Activated CD8-positive, alpha-beta T cell treated with anti-CD3 and anti-CD28 coated beads, Interleukin-2, amount 10 ng/mL, durations not matched to agents 7 days and 5 days (primary cell): ENCODE measurements at regions of chr9 and their contacts with region 1.

Region 1: DNA sequence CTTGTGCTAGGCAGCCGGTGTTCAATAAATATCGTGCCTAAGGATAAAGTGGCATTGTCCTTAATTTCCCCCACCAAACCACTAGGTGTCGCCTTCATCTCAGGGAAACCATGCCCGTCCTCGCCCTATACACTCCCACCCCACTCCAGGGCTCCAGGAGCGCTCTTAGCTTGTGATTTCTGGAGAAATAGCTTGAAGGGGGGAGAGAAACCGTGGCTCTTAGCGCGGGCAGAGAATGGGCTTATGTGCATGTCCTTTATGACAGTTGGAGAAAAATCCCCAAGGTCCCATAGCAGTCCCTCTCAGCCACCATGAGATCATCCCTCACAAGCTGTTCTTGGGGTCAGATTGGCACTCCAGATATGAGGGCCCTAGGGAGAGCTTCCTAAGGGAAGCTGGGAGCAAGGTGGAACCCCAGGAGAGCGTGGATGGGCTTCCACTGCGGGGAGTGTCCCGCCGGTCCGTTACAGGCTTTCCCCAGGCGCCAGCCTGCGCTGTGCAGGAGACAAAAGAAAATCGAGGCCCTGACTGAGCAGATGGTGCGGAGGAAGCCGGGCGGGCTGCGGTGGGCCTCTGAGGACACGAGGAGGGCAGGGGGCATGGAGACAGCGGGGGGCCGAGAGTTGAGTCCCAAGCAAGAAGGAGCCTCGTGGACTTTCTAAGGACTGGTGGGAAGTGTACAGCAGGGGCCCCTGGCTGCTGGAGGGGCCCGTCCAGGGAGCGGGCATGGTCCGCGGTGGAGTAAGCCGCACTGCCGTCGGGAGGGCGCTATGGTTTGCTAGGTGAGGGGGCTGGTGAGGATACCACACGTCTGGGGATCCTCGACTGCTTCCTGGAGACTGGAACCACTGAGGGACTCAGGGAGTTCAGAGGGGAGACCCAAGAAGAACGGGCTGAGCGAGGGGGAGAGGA is 750 bp upstream of the NPR2 start:
- DNase-seq: peak; percentile 73
- ATAC-seq: peak; percentile 90
- H3K4me3 Mint-ChIP-seq: no peak overlapping the region
- H3K27ac Mint-ChIP-seq: no peak overlapping the region
- H3K4me1 Mint-ChIP-seq: peaks cover 17% of the 10 kb centered on the region
- H3K27me3 Mint-ChIP-seq: no peaks in the 10 kb centered on the region

Region 2: DNA sequence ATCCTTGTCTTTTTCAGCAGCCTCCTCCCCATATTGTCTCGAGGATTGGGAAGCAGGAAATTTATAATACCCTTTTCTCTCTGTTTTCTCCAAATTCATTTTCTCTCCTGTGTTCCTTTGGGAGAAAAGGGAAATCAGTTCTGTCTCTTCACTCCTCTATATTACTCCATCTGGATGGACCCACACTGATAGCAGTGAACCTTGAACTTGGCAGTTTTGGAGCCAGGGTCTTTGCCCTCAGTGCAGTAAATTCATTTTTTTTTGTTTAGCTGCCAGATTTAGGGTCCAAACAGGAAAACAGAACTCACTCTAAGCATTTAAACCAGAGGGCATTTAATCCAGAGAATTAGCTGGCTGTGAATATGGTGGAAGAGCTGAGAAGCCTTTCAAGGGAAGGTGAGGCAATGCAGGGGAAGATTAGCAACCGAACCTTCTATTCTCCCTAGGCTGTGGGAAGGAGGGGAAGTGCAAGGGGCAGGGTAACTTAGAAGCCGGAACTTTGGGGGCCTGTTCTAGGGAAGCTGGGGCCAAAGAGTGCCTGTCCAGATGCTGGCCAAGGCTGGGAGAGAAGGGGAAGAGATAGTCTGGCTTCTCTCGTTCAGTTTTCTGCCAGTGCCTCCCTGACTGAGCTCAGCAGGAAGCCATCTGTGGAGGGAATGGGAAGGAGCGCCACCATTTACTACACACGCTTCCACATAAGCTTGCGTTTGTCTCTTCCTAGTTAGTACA is 15.6 kb before region 1 on chr9:
- CTCF ChIA-PET with region 1: interaction called, 17 read pairs
- POLR2A ChIA-PET with region 1: interaction called, 3 read pairs
- DNase-seq: no peak
- ATAC-seq: no peak
- H3K4me3 Mint-ChIP-seq: no peak overlapping the region
- H3K27ac Mint-ChIP-seq: no peak overlapping the region
- H3K4me1 Mint-ChIP-seq: no peaks in the 10 kb centered on the region
- H3K27me3 Mint-ChIP-seq: no peaks in the 10 kb centered on the region

Region 3: GRCh38 chr9:35814841-35815543 is 24.4 kb after region 1 on chr9 and contains the start of gene HINT2:
- CTCF ChIA-PET with region 1: interaction called, 33 read pairs
- POLR2A ChIA-PET with region 1: no interaction called
- DNase-seq: peak; percentile 100
- ATAC-seq: peak; percentile 82
- H3K4me3 Mint-ChIP-seq: peak within 1 kb of the TSS; percentile 91
- H3K27ac Mint-ChIP-seq: peak within 1 kb of the TSS; percentile 95
- H3K4me1 Mint-ChIP-seq: peaks cover 47% of the 10 kb centered on the region
- H3K27me3 Mint-ChIP-seq: peaks cover 14% of the 10 kb centered on the region
- total RNA-seq, gene HINT2: 74.7 to 76.8 TPM

Region 4: GRCh38 chr9:35820076-35820475 is 29.4 kb after region 1 on chr9:
- CTCF ChIA-PET with region 1: interaction called, 59 read pairs
- POLR2A ChIA-PET with region 1: no interaction called
- DNase-seq: no peak
- ATAC-seq: no peak
- H3K4me3 Mint-ChIP-seq: no peak overlapping the region
- H3K27ac Mint-ChIP-seq: no peak overlapping the region
- H3K4me1 Mint-ChIP-seq: peaks cover 3% of the 10 kb centered on the region
- H3K27me3 Mint-ChIP-seq: peaks cover 22% of the 10 kb centered on the region

Region 5: GRCh38 chr9:35826071-35826701 is 35.5 kb after region 1 on chr9:
- CTCF ChIA-PET with region 1: interaction called, 59 read pairs
- POLR2A ChIA-PET with region 1: no interaction called
- DNase-seq: peak; percentile 58
- ATAC-seq: peak; percentile 29
- H3K4me3 Mint-ChIP-seq: no peak overlapping the region
- H3K27ac Mint-ChIP-seq: no peak overlapping the region
- H3K4me1 Mint-ChIP-seq: peaks cover 27% of the 10 kb centered on the region
- H3K27me3 Mint-ChIP-seq: peaks cover 14% of the 10 kb centered on the region

Region 6: DNA sequence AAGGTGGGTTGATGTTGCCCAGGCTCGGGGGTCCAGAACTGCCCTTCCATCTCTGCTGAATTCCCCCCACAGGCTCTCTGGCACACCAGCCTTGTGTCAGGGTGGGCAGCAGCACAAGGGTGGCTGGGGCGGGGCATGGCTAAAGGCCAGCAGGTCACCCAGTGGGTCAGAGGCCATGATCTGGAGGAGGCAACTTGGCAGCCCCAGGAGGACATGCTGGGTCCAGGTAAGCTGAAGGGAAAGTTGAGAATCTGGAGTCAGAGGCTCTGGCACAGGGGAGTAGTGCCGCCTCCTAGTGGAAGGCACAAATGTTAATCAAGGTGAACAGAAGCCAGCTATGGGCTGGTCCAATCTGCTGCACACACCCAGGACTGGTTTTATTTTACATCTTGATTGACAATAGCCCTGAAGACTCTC is 44.6 kb after region 1 on chr9:
- CTCF ChIA-PET with region 1: interaction called, 21 read pairs
- POLR2A ChIA-PET with region 1: no interaction called
- DNase-seq: peak; percentile 41
- ATAC-seq: no peak
- H3K4me3 Mint-ChIP-seq: no peak overlapping the region
- H3K27ac Mint-ChIP-seq: no peak overlapping the region
- H3K4me1 Mint-ChIP-seq: peaks cover 15% of the 10 kb centered on the region
- H3K27me3 Mint-ChIP-seq: no peaks in the 10 kb centered on the region

Region 7: DNA sequence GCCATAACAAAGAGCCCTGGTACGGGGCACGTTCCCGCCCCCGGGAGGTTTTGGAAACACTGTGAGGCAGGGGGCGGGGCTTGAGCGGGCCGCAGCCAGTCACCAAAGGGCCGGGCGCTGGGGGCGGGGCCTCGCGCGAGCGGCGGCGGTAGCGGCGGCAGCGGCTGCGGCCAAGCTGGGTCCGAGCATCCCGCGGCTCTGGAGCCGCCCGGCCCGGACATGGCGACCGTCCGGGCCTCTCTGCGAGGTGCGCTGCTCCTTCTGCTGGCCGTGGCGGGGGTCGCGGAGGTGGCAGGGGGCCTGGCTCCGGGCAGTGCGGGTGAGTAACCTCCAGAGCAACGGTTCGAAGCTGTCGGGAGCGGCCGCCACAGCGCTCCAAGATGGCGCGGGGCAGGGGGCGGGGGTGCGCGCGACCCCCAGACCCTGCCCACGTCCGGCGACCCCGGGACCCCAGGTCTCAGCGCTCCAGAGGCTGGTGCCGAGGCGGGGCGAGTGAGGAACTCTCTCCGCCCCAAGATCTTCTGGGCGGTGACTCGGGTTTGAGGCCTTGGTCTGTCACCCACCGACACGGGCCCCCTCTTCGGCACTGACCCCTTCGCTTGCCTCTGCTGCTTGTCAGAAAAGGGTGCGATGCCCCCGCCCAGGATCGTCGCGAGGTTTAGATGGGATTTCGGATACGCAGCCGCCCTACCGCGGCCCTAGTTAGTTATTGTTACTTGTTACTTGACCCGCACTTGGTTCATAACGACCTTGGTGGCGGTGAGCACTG is 246.3 kb after region 1 on chr9 and contains the start of gene RECK:
- CTCF ChIA-PET with region 1: no interaction called
- POLR2A ChIA-PET with region 1: no interaction called
- DNase-seq: peak; percentile 88
- ATAC-seq: peak; percentile 93
- H3K4me3 Mint-ChIP-seq: peak within 1 kb of the TSS; percentile 87
- H3K27ac Mint-ChIP-seq: peak within 1 kb of the TSS; percentile 68
- H3K4me1 Mint-ChIP-seq: peaks cover 40% of the 10 kb centered on the region
- H3K27me3 Mint-ChIP-seq: peaks cover 20% of the 10 kb centered on the region
- total RNA-seq, gene RECK: 5.7 to 7.3 TPM